Sciatic nerve (tissue), 2 donors: ENCODE measurements at regions of chr7 and their contacts with region 1.

Region 1: GRCh38 chr7:32458025-32458424 is 32.2 kb downstream of the LSM5 start:
- DNase-seq: no peak
- ATAC-seq: no peak

Region 2: DNA sequence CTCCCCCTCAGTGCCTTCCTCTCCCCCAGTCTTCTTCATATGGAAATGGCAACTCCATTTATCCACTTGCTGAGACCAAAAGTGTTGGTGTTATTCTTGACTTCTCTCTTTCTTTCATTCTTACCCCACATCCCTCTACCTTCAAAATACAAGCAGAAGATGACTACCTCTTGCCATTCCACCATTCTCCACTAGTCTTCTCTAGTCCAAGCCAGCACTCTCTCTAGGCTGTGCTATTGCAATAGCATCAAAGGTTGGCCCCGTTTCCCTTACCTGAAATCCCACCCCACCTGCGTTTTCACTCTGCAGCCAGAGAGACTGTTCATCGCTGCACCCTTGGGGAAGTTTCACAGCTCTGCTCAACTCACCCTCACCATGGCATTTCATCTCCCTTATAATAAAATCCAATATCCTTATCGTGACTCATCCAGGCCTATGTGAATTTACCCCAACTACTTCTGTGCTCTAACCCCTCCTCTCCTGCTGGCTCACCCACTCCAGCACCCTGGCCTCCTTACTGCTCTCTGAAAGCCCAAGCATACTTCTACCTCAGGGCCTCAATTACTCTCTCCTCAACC is 76.9 kb before region 1 on chr7:
- intact Hi-C with region 1: no loop called
- DNase-seq: no peak
- ATAC-seq: no peak

Region 3: GRCh38 chr7:32489788-32490126 is 31.7 kb after region 1 on chr7:
- intact Hi-C with region 1: no loop called
- DNase-seq: no peak
- ATAC-seq: no peak

Region 4: DNA sequence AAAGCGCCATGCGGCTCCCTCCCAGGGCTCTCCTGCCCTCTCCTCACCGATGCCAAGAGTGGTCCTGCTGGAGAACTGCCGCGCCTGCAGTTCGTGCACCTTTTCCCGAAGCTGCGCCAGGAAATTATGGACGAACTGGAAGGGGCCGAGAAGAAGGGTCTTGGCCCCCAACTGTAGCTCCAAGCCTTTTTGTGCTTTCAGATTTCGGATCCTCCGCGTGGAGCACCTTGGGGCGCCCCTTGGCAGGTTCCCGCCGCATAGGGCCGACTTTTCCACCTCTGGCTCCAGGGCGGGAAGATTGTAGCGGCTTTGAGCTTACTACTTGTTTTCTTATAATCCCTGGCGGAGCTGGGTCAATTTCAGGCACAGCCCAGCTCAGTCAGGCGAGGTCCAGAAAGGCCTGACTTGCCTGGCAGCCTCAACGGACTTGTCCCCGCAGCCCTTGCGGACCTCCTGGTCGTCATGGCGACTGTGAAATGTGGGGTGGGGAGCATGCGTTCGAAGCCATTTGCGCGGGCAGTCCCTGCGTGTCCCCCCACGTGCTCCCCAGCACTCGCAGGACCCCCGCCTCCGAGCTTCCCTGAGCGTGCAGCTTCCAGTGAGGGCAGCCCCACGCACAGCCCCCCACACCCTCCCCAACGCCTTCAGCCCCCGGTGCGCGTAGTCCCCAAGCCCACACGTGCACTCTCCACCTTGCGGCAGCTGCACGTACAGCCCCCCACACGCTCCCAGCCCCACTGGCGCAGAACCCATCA is 303.6 kb after region 1 on chr7:
- intact Hi-C with region 1: no loop called
- DNase-seq: no peak
- ATAC-seq: peak; percentile 36

Region 5: DNA sequence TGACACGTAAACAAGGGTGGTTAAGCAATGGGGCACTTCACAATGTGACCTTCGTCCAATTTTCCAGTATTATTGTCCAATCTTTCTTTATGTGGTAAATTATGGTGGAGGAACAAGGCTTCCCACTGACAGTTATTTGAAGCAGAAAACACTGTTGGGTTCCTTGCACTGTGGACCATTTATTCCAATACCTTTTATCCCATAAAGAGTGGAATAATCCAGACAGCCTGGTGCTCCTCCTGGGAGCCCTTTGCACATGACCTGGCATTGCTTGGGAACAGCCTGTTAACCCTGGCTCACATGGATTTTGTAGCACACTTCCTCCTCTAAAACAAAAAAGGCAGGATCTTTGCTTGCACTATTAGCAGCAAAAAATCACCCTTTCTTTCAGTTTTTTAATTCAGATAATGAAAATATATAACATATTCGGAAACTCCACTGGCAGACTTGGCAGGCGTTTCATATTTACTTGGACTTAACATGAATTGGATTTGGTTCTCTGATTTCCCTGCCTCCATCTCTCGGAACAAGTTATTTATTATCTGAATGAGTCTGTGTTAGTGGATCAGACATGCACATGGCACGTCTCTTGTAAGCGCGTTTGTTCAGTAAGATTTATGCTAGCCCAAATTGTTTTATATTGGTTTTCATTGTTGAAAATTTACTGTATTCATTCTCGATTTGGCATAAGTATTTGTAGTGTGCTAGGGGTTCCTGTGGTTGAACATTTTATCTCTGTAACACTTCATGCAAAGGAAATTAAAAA is 1506.6 kb after region 1 on chr7:
- intact Hi-C with region 1: loop called (anchors 5 kb)
- DNase-seq: no peak
- ATAC-seq: peak; percentile 64